Naive thymus-derived CD4-positive, alpha-beta T cell (primary cell): ENCODE measurements at regions of chr18 and their contacts with region 1.

Region 1: DNA sequence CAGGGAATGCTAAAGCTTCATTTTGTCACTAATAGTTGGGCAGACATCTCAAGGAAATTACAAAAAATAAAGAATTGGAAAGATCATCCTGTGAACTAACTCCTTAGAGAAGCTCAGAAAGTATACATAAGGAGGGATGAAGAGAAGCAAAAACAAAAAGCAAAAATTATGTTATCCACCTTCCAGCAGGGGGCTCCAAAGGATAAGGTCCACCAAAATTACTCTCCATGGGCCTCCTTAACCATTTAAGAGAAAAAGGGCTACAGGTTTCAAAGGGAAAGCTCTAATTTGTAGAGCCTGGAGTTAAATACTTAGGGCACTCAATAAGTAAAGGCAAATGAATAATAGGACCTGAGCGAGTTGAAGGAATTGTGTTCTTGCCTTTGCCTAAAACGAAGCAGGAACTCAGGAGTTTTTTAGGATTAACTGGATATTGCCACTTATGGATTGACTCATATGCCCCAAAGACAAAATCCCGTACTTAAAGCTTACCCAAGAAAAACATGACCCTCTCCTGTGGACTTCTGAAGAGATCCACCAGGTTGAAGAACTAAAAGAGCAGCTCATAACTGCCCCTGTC is 1167.9 kb downstream of the DSC3 start:
- DNase-seq: no peak
- ATAC-seq: no peak
- H3K4me3 ChIP-seq: no peak overlapping the region
- H3K4me3 Mint-ChIP-seq: no peak overlapping the region
- H3K27ac ChIP-seq: no peak overlapping the region
- H3K27ac Mint-ChIP-seq: no peak overlapping the region
- H3K4me1 ChIP-seq: no peaks in the 10 kb centered on the region
- H3K4me1 Mint-ChIP-seq: no peaks in the 10 kb centered on the region
- H3K27me3 ChIP-seq: no peaks in the 10 kb centered on the region
- H3K27me3 Mint-ChIP-seq: no peaks in the 10 kb centered on the region

Region 2: DNA sequence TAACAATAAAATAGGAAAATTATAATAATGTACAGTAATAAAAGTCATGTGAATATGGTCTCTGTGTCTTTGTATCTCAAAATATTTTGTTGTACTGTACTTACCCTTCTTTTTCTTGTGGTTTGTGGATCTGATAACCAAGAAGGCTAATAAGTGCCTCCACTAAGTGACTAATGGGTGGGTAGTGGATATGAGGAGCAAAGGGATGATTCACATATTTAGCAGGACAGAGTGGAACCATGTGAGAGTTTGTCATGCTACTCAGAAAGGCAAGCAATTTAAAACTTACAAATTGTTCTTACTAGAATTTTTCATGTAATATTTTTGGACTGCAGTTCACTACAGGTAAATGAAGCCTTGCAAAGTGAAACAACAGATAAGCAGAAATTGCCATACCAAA is 456.5 kb before region 1 on chr18:
- CTCF ChIA-PET with region 1: no interaction called
- POLR2A ChIA-PET with region 1: no interaction called
- intact Hi-C with region 1: no loop called
- DNase-seq: no peak
- ATAC-seq: no peak
- H3K4me3 ChIP-seq: no peak overlapping the region
- H3K4me3 Mint-ChIP-seq: no peak overlapping the region
- H3K27ac ChIP-seq: no peak overlapping the region
- H3K27ac Mint-ChIP-seq: no peak overlapping the region
- H3K4me1 ChIP-seq: no peaks in the 10 kb centered on the region
- H3K4me1 Mint-ChIP-seq: no peaks in the 10 kb centered on the region
- H3K27me3 ChIP-seq: no peaks in the 10 kb centered on the region
- H3K27me3 Mint-ChIP-seq: no peaks in the 10 kb centered on the region

Region 3: DNA sequence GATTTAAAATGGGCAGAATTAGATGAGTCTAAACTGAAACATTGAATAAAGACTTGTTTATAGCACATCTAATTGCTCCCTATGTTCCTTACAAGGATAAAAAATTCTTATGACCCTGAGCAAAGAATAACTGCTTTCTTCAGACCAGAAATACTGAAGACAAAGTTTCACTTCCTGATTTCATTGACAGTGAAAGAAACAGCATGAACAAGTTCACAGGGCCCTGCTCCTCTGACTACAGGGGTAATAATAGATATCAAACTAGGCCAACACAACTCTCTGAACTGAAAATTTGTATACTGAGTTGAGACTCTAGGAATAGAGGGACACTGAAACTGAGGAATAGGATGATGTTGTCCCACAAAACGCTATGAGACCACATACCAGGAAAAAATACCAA is 314.3 kb before region 1 on chr18:
- CTCF ChIA-PET with region 1: no interaction called
- POLR2A ChIA-PET with region 1: no interaction called
- intact Hi-C with region 1: no loop called
- DNase-seq: no peak
- ATAC-seq: no peak
- H3K4me3 ChIP-seq: no peak overlapping the region
- H3K4me3 Mint-ChIP-seq: no peak overlapping the region
- H3K27ac ChIP-seq: no peak overlapping the region
- H3K27ac Mint-ChIP-seq: no peak overlapping the region
- H3K4me1 ChIP-seq: no peaks in the 10 kb centered on the region
- H3K4me1 Mint-ChIP-seq: no peaks in the 10 kb centered on the region
- H3K27me3 ChIP-seq: no peaks in the 10 kb centered on the region
- H3K27me3 Mint-ChIP-seq: no peaks in the 10 kb centered on the region

Region 4: GRCh38 chr18:30280880-30281470 is 406.4 kb after region 1 on chr18:
- CTCF ChIA-PET with region 1: no interaction called
- POLR2A ChIA-PET with region 1: no interaction called
- intact Hi-C with region 1: loop called in 1 of 2 experiments (anchors 2 kb)
- DNase-seq: no peak
- ATAC-seq: no peak
- H3K4me3 ChIP-seq: no peak overlapping the region
- H3K4me3 Mint-ChIP-seq: no peak overlapping the region
- H3K27ac ChIP-seq: no peak overlapping the region
- H3K27ac Mint-ChIP-seq: no peak overlapping the region
- H3K4me1 ChIP-seq: no peaks in the 10 kb centered on the region
- H3K4me1 Mint-ChIP-seq: no peaks in the 10 kb centered on the region
- H3K27me3 ChIP-seq: no peaks in the 10 kb centered on the region
- H3K27me3 Mint-ChIP-seq: no peaks in the 10 kb centered on the region

Region 5: DNA sequence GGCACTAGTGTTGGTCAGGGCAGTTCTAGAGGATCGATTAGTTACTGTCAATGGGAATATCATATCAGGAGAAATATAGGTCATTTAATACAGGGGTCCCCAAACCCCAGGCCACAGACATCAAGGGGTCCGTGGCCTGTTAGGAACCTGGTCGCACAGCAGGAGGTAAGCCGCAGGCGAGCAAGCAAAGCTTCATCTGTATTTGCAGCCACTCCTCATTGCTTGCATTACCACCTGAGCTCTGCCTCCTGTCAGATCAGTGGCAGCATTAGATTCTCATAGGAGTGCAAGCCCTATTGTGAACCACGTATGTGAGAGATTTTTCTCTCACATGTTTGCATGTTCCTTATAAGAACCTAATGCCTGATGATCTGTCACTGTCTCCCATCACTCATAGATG is 1086.1 kb after region 1 on chr18:
- CTCF ChIA-PET with region 1: no interaction called
- POLR2A ChIA-PET with region 1: no interaction called
- intact Hi-C with region 1: loop called in 1 of 2 experiments (anchors 5 kb)
- DNase-seq: no peak
- ATAC-seq: no peak
- H3K4me3 ChIP-seq: no peak overlapping the region
- H3K4me3 Mint-ChIP-seq: no peak overlapping the region
- H3K27ac ChIP-seq: no peak overlapping the region
- H3K27ac Mint-ChIP-seq: no peak overlapping the region
- H3K4me1 ChIP-seq: no peaks in the 10 kb centered on the region
- H3K4me1 Mint-ChIP-seq: no peaks in the 10 kb centered on the region
- H3K27me3 ChIP-seq: no peaks in the 10 kb centered on the region
- H3K27me3 Mint-ChIP-seq: no peaks in the 10 kb centered on the region